ENCODE measurements at regions of chr9 and their contacts with region 1.

Region 1: GRCh38 chr9:37197158-37198038 is 77.0 kb downstream of the ZCCHC7 start:
- DNase-seq: no peak
- ATAC-seq: peak; percentile 72
- H3K4me3 Mint-ChIP-seq: peak overlapping the region; percentile 64
- H3K27ac Mint-ChIP-seq: peak overlapping the region; percentile 91
- H3K4me1 Mint-ChIP-seq: peaks cover 96% of the 10 kb centered on the region
- H3K27me3 Mint-ChIP-seq: no peaks in the 10 kb centered on the region
- CTCF ChIP-seq: no peak

Region 2: DNA sequence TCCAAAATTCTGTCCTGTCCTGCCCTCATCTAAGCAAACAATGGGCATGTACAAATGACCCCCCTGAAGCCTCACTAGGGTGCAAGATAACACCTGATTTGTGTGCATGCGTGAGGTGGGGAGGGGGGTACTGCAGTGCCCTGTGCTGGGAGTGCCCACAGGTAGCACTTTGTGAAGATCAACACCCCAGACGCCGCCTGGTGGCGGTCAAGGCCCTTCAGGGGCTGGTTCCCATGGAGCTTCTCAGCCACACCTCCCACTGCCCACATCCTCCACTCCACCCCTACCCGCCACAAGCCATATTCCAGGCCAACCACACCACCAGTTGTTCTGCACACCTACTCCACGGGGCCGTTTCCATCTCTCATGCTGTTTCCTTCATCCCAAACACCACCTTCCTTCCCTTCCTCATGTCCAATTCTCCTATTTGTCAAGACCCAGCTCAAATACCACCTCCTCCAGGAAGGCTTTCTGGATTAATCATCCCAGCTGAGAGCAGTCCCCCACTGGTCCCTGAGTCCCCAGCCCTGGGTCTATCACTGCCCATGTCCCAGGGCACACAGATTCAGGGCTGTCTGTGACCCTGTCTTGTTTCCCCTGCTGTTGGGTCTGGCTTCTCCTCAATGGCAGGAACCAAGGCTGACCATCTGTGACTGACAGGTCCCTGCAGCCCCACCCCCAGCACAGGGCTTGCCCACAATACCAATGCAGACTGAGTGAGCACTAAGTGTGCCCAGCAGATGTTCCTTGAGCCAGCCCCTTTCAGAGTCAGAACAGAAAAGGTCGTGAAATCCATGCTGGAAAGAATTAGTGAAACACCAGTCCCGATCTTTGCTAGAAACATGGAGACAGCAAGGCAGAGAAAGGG is 341.7 kb before region 1 on chr9:
- CTCF ChIA-PET with region 1: no interaction called
- POLR2A ChIA-PET with region 1: no interaction called
- intact Hi-C with region 1: no loop called
- DNase-seq: no peak
- ATAC-seq: peak; percentile 61
- H3K4me3 Mint-ChIP-seq: no peak overlapping the region
- H3K27ac Mint-ChIP-seq: peak overlapping the region; percentile 79
- H3K4me1 Mint-ChIP-seq: peaks cover 47% of the 10 kb centered on the region
- H3K27me3 Mint-ChIP-seq: no peaks in the 10 kb centered on the region
- CTCF ChIP-seq: no peak

Region 3: DNA sequence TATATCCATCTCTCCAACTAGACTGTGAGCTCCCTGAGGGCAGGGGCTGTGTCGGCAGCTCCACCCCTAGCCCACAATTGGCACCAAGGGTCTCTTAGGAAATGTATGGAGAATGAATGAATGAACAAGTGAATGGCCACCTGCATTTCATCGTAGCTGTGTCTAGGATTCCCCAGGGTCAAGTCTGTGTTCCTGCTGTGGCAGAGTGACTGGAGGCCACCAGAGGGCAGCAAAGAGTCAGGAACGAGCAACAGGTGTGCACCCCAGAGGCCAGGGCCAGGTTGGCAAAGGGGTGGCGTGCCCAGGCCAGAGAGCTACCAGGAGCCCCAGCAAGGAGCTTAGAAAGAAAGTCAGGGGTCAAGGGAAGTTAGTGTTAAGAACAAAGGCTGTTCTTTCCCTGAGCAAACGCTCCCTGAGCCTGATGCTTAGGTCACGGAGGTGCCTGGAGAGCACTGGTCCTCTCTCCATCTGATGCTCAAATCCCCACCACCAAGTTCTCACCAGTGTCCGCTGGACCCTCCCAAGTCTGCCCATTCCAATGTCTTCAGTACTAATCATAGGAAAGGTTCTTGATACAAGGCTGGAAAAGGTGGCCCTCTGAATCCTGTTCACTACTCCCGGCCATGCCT is 324.0 kb before region 1 on chr9:
- CTCF ChIA-PET with region 1: no interaction called
- POLR2A ChIA-PET with region 1: no interaction called
- intact Hi-C with region 1: loop called (anchors 10 kb)
- DNase-seq: peak; percentile 52
- ATAC-seq: peak; percentile 77
- H3K4me3 Mint-ChIP-seq: no peak overlapping the region
- H3K27ac Mint-ChIP-seq: peak overlapping the region; percentile 87
- H3K4me1 Mint-ChIP-seq: peaks cover 63% of the 10 kb centered on the region
- H3K27me3 Mint-ChIP-seq: no peaks in the 10 kb centered on the region
- CTCF ChIP-seq: no peak

Region 4: GRCh38 chr9:37209431-37210386 is 12.3 kb after region 1 on chr9:
- CTCF ChIA-PET with region 1: interaction called, 3 read pairs
- POLR2A ChIA-PET with region 1: interaction called, 15 read pairs
- intact Hi-C with region 1: loop called (anchors 1 kb)
- DNase-seq: no peak
- ATAC-seq: peak; percentile 35
- H3K4me3 Mint-ChIP-seq: peak overlapping the region; percentile 63
- H3K27ac Mint-ChIP-seq: peak overlapping the region; percentile 88
- H3K4me1 Mint-ChIP-seq: peaks cover 81% of the 10 kb centered on the region
- H3K27me3 Mint-ChIP-seq: no peaks in the 10 kb centered on the region
- CTCF ChIP-seq: no peak

Region 5: GRCh38 chr9:37239224-37239859 is 41.9 kb after region 1 on chr9:
- CTCF ChIA-PET with region 1: no interaction called
- POLR2A ChIA-PET with region 1: interaction called, 13 read pairs
- intact Hi-C with region 1: no loop called
- DNase-seq: no peak
- ATAC-seq: no peak
- H3K4me3 Mint-ChIP-seq: no peak overlapping the region
- H3K27ac Mint-ChIP-seq: no peak overlapping the region
- H3K4me1 Mint-ChIP-seq: peaks cover 65% of the 10 kb centered on the region
- H3K27me3 Mint-ChIP-seq: no peaks in the 10 kb centered on the region
- CTCF ChIP-seq: no peak

Region 6: GRCh38 chr9:37293664-37294524 is 96.5 kb after region 1 on chr9:
- CTCF ChIA-PET with region 1: no interaction called
- POLR2A ChIA-PET with region 1: interaction called, 9 read pairs
- intact Hi-C with region 1: loop called (anchors 2 kb)
- DNase-seq: no peak
- ATAC-seq: peak; percentile 69
- H3K4me3 Mint-ChIP-seq: peak overlapping the region; percentile 67
- H3K27ac Mint-ChIP-seq: peak overlapping the region; percentile 97
- H3K4me1 Mint-ChIP-seq: peaks cover 95% of the 10 kb centered on the region
- H3K27me3 Mint-ChIP-seq: no peaks in the 10 kb centered on the region
- CTCF ChIP-seq: no peak

Region 7: GRCh38 chr9:37324261-37324683 is 126.9 kb after region 1 on chr9:
- CTCF ChIA-PET with region 1: interaction called, 6 read pairs
- POLR2A ChIA-PET with region 1: interaction called, 11 read pairs
- intact Hi-C with region 1: no loop called
- DNase-seq: peak; percentile 42
- ATAC-seq: peak; percentile 86
- H3K4me3 Mint-ChIP-seq: peak overlapping the region; percentile 59
- H3K27ac Mint-ChIP-seq: peak overlapping the region; percentile 99
- H3K4me1 Mint-ChIP-seq: peaks cover 69% of the 10 kb centered on the region
- H3K27me3 Mint-ChIP-seq: no peaks in the 10 kb centered on the region
- CTCF ChIP-seq: no peak